ENCODE measurements at regions of chr11 and their contacts with region 1.

Region 1: DNA sequence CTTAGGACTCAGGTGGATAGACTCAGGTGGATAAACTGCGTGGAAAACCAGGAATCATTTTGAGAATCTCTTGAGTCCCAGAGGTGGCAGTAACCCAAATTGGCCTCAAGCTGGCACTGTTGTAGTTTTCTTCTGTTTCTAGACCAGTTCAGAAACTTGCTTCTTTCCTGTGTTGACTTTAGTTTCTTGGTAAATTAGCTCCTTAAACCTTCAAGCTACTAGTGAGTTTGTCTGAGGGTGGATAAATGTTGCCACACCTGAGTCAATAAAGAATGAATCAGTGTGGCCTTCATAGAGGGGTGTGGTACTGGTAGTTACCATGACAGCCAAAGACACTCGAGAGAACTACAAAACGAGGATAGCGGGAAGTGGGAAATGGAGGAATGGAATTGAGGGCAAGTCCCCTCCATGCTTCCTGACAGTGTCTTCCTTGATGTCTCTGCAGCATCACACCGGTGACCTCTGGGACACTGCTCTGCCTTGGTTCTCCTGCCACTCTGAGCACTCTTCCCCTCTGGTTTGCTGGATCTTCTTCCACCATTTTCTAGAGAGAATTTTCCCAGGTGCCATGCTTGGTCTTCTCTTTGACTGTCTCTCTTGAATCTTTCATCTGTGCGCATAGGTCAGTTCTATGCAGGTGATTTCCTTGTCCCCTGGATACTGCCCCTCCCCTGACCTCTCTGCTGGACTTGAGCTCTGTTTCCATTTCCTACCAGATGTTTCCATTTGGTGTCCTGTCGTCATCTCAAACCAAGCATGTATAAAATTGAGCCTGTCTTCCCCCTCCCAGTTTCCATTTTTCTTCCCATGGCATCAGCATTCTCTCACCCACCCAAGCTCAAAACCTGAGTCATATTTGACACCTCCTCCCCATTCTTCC is 7.2 kb downstream of the POLD4 start:
- DNase-seq: peak; percentile 76 to 100
- H3K4me3 ChIP-seq: peak overlapping the region; percentile 11; the same call in 1 of the 2 replicates
- H3K27ac ChIP-seq: peak overlapping the region; percentile 82
- H3K4me1 ChIP-seq: peaks cover 48% of the 10 kb centered on the region
- H3K27me3 ChIP-seq: no peaks in the 10 kb centered on the region
- CTCF ChIP-seq: peak; percentile 96

Region 2: GRCh38 chr11:66704726-66705360 is 641.3 kb before region 1 on chr11:
- CTCF ChIA-PET with region 1: interaction called, 11 read pairs
- POLR2A ChIA-PET with region 1: no interaction called
- intact Hi-C with region 1: no loop called
- DNase-seq: no peak
- H3K4me3 ChIP-seq: no peak overlapping the region
- H3K27ac ChIP-seq: no peak overlapping the region
- H3K4me1 ChIP-seq: peaks cover 11% of the 10 kb centered on the region
- H3K27me3 ChIP-seq: no peaks in the 10 kb centered on the region
- CTCF ChIP-seq: no peak

Region 3: GRCh38 chr11:67382276-67383136 is 36.3 kb after region 1 on chr11:
- CTCF ChIA-PET with region 1: interaction called, 55 read pairs
- POLR2A ChIA-PET with region 1: interaction called, 6 read pairs
- intact Hi-C with region 1: no loop called
- DNase-seq: peak; percentile 66 to 84
- H3K4me3 ChIP-seq: no peak overlapping the region
- H3K27ac ChIP-seq: no peak overlapping the region
- H3K4me1 ChIP-seq: peaks cover 64% of the 10 kb centered on the region
- H3K27me3 ChIP-seq: no peaks in the 10 kb centered on the region
- CTCF ChIP-seq: peak; percentile 99

Region 4: GRCh38 chr11:67656278-67656922 is 310.2 kb after region 1 on chr11:
- CTCF ChIA-PET with region 1: interaction called, 18 read pairs
- POLR2A ChIA-PET with region 1: no interaction called
- intact Hi-C with region 1: loop called (anchors 5 kb)
- DNase-seq: no peak
- H3K4me3 ChIP-seq: no peak overlapping the region
- H3K27ac ChIP-seq: no peak overlapping the region
- H3K4me1 ChIP-seq: no peaks in the 10 kb centered on the region
- H3K27me3 ChIP-seq: no peaks in the 10 kb centered on the region
- CTCF ChIP-seq: no peak

Measured in PC-9 (cell line).